Endothelial cell of umbilical vein (primary cell): ENCODE measurements at regions of chr20 and their contacts with region 1.

Region 1: GRCh38 chr20:49846206-49846807 is 33.7 kb downstream of the SLC9A8 start:
- DNase-seq: peak; percentile 48
- H3K4me3 ChIP-seq: no peak overlapping the region
- H3K27ac ChIP-seq: no peak overlapping the region
- H3K4me1 ChIP-seq: no peaks in the 10 kb centered on the region
- H3K27me3 ChIP-seq: no peaks in the 10 kb centered on the region
- CTCF ChIP-seq: peak; percentile 41 to 56
- POLR2A ChIP-seq: no peak

Region 2: DNA sequence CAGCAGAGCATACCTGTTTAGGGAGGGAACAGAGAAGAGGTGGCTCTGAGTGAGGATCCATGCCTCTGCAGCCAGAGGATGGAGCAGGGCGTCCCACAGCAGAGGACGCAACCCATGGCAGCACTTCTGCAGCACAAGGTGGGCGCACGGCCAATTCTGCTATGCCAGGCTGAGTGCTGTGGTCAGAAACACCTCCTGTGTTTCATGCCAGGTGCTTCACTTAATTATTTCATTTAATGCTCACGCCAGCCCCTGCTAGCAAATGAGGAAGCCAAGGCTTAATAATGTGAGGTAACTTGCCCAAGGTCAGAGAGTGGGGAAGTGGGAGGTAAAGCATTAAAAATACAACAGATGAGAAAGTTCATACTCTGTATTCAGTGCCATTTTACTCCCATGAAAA is 209.9 kb before region 1 on chr20:
- CTCF ChIA-PET with region 1: interaction called, 21 read pairs
- POLR2A ChIA-PET with region 1: no interaction called
- dilution Hi-C with region 1: no loop called
- intact Hi-C with region 1: no loop called
- DNase-seq: no peak
- H3K4me3 ChIP-seq: no peak overlapping the region
- H3K27ac ChIP-seq: no peak overlapping the region
- H3K4me1 ChIP-seq: no peaks in the 10 kb centered on the region
- H3K27me3 ChIP-seq: no peaks in the 10 kb centered on the region
- CTCF ChIP-seq: no peak
- POLR2A ChIP-seq: no peak

Region 3: DNA sequence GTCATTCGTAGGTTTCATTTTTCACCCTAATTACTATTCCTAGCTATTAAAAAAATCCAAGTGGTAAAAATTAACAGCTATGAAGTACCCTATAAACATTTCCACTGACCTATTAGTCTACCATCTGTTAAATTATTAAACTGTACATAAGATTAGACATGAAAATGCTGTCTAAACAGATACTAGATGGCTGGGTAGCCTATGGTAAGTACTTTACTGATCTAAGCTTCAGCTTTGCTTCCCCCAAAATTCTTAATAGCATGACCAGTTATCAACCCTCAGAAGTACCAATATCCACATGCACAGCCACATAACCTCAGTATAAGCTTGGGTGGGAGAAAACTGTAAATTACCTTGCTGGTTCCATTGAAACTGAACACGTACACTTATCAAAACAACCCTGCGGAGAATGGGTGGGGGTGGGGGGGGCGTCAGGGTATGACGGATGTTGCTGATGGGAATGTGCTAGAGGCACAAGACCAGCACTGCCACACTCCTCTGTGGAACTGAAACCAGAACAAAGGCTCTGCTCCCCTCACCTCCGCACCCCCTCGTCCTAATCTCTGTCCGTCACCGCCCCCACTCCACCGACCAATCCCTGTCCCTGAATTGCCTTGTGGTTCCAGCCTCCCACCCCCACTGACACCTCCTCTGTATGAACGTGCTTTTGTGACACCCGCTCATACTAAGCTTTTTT is 178.0 kb before region 1 on chr20:
- CTCF ChIA-PET with region 1: interaction called, 16 read pairs
- POLR2A ChIA-PET with region 1: no interaction called
- dilution Hi-C with region 1: loop called (anchors 25 kb)
- intact Hi-C with region 1: no loop called
- DNase-seq: no peak
- H3K4me3 ChIP-seq: no peak overlapping the region
- H3K27ac ChIP-seq: no peak overlapping the region
- H3K4me1 ChIP-seq: no peaks in the 10 kb centered on the region
- H3K27me3 ChIP-seq: no peaks in the 10 kb centered on the region
- CTCF ChIP-seq: no peak
- POLR2A ChIP-seq: no peak

Region 4: DNA sequence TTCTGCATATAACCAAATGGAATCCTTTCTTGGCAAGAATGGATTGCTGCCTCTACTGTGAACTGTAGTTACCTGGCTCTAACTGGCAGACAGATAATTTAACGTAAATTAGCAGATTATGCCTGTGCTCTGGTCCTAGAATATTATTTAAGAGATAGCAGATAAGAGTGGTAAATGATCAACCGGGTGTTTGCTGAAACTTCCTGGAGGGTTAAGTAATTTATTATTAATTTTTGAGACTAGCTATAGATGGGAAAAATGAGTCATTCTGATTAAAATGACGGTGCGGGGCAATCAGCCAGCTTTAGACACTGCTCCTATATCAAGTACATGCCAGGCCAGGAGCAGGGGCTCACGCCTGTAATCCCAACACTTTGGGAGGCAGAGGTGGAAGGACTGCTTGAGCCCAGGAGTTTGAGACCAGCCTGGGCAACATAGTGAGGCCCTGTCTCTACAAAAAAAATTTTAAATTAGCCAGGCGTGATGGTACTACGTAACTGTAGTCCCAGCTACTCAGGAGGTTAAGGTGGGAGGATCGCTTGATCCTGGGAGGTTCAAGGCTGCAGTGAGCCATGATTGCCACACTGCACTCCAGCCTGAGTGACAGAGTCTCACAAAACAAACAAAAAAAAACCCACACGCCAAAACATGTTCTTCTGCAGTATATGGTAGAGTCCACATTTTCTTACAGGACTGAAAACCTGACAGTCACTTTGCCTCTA is 155.2 kb before region 1 on chr20:
- CTCF ChIA-PET with region 1: interaction called, 12 read pairs
- POLR2A ChIA-PET with region 1: no interaction called
- dilution Hi-C with region 1: no loop called
- intact Hi-C with region 1: no loop called
- DNase-seq: peak; percentile 89
- H3K4me3 ChIP-seq: no peak overlapping the region
- H3K27ac ChIP-seq: peak overlapping the region; percentile 63
- H3K4me1 ChIP-seq: peaks cover 37% of the 10 kb centered on the region
- H3K27me3 ChIP-seq: no peaks in the 10 kb centered on the region
- CTCF ChIP-seq: no peak
- POLR2A ChIP-seq: no peak

Region 5: GRCh38 chr20:49775229-49775693 is 71.0 kb before region 1 on chr20:
- CTCF ChIA-PET with region 1: interaction called, 8 read pairs
- POLR2A ChIA-PET with region 1: no interaction called
- dilution Hi-C with region 1: no loop called
- intact Hi-C with region 1: loop called (anchors 5 kb)
- DNase-seq: peak; percentile 98
- H3K4me3 ChIP-seq: no peak overlapping the region
- H3K27ac ChIP-seq: peak overlapping the region; percentile 95
- H3K4me1 ChIP-seq: peaks cover 37% of the 10 kb centered on the region
- H3K27me3 ChIP-seq: no peaks in the 10 kb centered on the region
- CTCF ChIP-seq: no peak
- POLR2A ChIP-seq: peak; percentile 21

Region 6: DNA sequence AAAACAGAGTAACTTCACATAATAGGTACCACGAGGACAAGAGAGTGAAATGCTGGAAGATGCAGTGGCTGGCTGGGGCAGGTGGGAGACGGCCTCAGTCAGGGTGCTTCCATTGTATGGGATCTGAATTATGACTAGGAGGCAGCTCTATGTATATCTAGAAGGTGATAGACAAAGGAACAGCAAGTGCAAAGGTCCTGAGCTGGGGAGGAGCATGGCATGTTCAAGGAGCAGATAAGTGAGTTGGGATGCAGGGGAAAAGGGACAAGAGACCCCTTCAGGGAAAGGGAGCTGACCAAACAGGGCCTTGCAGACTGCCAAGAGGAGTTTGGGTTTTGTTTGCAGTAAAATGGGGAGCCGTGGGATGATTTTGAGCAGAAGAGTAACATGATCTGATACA is 41.9 kb before region 1 on chr20:
- CTCF ChIA-PET with region 1: no interaction called
- POLR2A ChIA-PET with region 1: no interaction called
- dilution Hi-C with region 1: no loop called
- intact Hi-C with region 1: no loop called
- DNase-seq: no peak
- H3K4me3 ChIP-seq: no peak overlapping the region
- H3K27ac ChIP-seq: no peak overlapping the region
- H3K4me1 ChIP-seq: no peaks in the 10 kb centered on the region
- H3K27me3 ChIP-seq: no peaks in the 10 kb centered on the region
- CTCF ChIP-seq: no peak
- POLR2A ChIP-seq: no peak

Region 7: DNA sequence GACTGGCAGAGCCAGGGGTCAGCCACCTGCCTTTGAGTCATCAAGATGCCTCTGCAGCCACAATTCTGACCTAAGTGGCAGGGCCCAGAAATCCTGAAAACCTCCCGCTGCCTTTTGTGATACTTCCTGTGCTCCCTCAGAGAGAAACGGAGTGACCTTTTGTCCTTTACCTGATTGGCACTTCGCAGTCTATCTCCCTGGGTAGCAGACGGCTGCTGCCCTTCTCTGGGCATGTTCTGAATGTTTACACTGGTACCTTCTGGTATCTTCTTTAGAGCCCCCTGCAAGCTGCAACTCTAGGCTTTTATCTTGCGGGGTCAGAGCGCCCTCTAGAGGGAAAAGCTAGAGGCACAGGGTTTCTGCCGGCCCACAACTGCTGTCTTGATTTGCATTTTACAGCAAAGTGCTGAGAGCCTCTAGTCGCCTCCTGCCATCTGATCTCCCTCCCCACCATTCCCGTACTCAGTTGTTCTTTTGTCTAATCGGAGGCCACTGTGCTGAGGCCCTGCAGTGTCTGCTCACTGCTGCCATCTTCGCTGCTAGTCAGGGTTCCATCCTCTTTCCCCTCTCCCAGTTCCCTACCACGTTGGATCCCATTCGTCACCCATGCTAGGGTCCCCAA is 42.1 kb after region 1 on chr20:
- CTCF ChIA-PET with region 1: interaction called, 23 read pairs
- POLR2A ChIA-PET with region 1: no interaction called
- dilution Hi-C with region 1: no loop called
- intact Hi-C with region 1: no loop called
- DNase-seq: peak; percentile 73
- H3K4me3 ChIP-seq: no peak overlapping the region
- H3K27ac ChIP-seq: no peak overlapping the region
- H3K4me1 ChIP-seq: peaks cover 20% of the 10 kb centered on the region
- H3K27me3 ChIP-seq: no peaks in the 10 kb centered on the region
- CTCF ChIP-seq: peak; percentile 80 to 88
- POLR2A ChIP-seq: no peak